ENCODE measurements at regions of chr15 and their contacts with region 1.

Region 1: GRCh38 chr15:48861813-48862431 is 16.0 kb upstream of the EID1 start:
- DNase-seq: peak; percentile 33
- H3K4me3 Mint-ChIP-seq: no peak overlapping the region
- H3K27ac Mint-ChIP-seq: no peak overlapping the region
- H3K4me1 Mint-ChIP-seq: peaks cover 23% of the 10 kb centered on the region
- H3K27me3 Mint-ChIP-seq: peaks cover 7% of the 10 kb centered on the region

Region 2: GRCh38 chr15:48507416-48508065 is 354.4 kb before region 1 on chr15:
- CTCF ChIA-PET with region 1: no interaction called
- POLR2A ChIA-PET with region 1: no interaction called
- DNase-seq: no peak
- H3K4me3 Mint-ChIP-seq: no peak overlapping the region
- H3K27ac Mint-ChIP-seq: no peak overlapping the region
- H3K4me1 Mint-ChIP-seq: no peaks in the 10 kb centered on the region
- H3K27me3 Mint-ChIP-seq: peaks cover 1% of the 10 kb centered on the region

Region 3: GRCh38 chr15:48963524-48964113 is 101.7 kb after region 1 on chr15 and contains the start of gene SHC4:
- CTCF ChIA-PET with region 1: interaction called, 34 read pairs
- POLR2A ChIA-PET with region 1: interaction called, 4 read pairs
- DNase-seq: peak; percentile 23
- H3K4me3 Mint-ChIP-seq: peak within 1 kb of the TSS; percentile 67
- H3K27ac Mint-ChIP-seq: peak within 1 kb of the TSS; percentile 58
- H3K4me1 Mint-ChIP-seq: peaks cover 51% of the 10 kb centered on the region
- H3K27me3 Mint-ChIP-seq: peaks cover 35% of the 10 kb centered on the region
- total RNA-seq, gene SHC4: 1.9 to 2.8 TPM

Region 4: GRCh38 chr15:49145651-49146609 is 284.0 kb after region 1 on chr15:
- CTCF ChIA-PET with region 1: interaction called, 62 read pairs
- POLR2A ChIA-PET with region 1: interaction called, 3 read pairs
- DNase-seq: peak; percentile 23
- H3K4me3 Mint-ChIP-seq: no peak overlapping the region
- H3K27ac Mint-ChIP-seq: no peak overlapping the region
- H3K4me1 Mint-ChIP-seq: peaks cover 28% of the 10 kb centered on the region
- H3K27me3 Mint-ChIP-seq: no peaks in the 10 kb centered on the region

Region 5: GRCh38 chr15:49421991-49422390 is 560.1 kb after region 1 on chr15:
- CTCF ChIA-PET with region 1: interaction called, 39 read pairs
- POLR2A ChIA-PET with region 1: no interaction called
- DNase-seq: peak; percentile 35
- H3K4me3 Mint-ChIP-seq: peak overlapping the region; percentile 35
- H3K27ac Mint-ChIP-seq: no peak overlapping the region
- H3K4me1 Mint-ChIP-seq: no peaks in the 10 kb centered on the region
- H3K27me3 Mint-ChIP-seq: peaks cover 14% of the 10 kb centered on the region

Measured in activated CD4-positive, alpha-beta memory T cell treated with anti-CD3 and anti-CD28 coated beads, Interleukin-2, amount 10 ng/mL, durations not matched to agents 7 days and 5 days (primary cell).